ENCODE measurements at regions of chr20 and their contacts with region 1.

Region 1: DNA sequence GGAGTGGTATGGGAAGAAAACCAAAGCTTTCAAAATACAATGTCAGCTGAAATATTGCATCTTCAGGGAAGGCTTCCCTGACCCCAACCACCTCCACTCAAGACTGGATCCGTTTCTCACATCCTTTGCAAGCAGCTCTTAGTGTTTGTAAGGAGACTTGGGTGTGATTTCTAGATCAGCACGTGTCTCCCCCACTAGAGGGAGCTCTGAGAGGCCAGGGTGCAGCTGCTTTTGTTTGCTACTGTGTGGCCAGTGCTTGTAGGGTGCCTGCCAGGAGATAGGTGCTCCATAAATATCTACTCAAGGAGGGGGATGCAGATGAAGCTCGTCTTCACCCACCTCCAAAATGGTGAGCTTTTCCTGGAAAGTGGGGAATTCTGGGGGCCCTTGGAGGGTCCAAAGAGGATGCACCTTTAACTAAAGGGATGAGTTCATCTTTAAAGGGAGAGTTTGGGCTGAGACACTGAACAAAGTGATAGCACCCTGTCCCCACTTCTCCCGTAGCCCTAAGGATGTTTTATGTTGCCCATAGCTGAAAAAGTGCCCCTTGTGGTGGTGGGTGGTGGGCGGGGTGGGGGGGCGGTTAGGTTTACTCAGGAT is 52.6 kb upstream of the MAFB start:
- DNase-seq: no peak
- H3K4me3 ChIP-seq: no peak overlapping the region
- H3K27ac ChIP-seq: no peak overlapping the region
- H3K4me1 ChIP-seq: peaks cover 0 to 10% of the 10 kb centered on the region in 2 experiments; a peak in 2 of 4 replicates
- H3K27me3 ChIP-seq: no peaks in the 10 kb centered on the region
- CTCF ChIP-seq: peak; percentile 54
- EP300 ChIP-seq: no peak
- RAD21 ChIP-seq: peak; percentile 48

Region 2: GRCh38 chr20:40687384-40688128 is 54.1 kb before region 1 on chr20:
- CTCF ChIA-PET with region 1: no interaction called
- POLR2A ChIA-PET with region 1: no interaction called
- DNase-seq: peak; percentile 67
- H3K4me3 ChIP-seq: peak overlapping the region; percentile 22 to 77; a peak in 2 of 4 replicates
- H3K27ac ChIP-seq: no peak overlapping the region
- H3K4me1 ChIP-seq: peaks cover 0 to 11% of the 10 kb centered on the region in 2 experiments; a peak in 1 of 4 replicates
- H3K27me3 ChIP-seq: peaks cover 53% of the 10 kb centered on the region
- CTCF ChIP-seq: no peak
- EP300 ChIP-seq: no peak
- RAD21 ChIP-seq: no peak

Region 3: DNA sequence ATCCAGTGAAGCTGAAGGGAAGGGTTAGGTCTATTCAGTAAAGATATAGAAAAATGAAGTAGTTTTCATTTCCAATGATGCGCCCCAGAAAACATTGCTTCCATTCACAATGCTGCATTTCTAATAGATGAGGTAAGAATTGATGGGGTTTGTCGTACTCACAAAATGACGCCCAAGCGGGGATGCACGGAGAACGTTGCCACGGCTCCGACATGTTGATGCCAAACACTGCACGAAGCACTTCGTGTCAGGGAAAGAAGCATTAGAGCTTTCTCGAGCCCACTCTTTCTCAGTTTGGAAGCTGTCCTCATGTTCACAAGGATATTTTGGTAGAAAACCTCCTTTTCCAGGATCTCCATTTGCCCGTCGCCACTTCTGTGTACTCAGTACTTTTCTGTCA is 31.0 kb before region 1 on chr20:
- CTCF ChIA-PET with region 1: no interaction called
- POLR2A ChIA-PET with region 1: no interaction called
- DNase-seq: no peak
- H3K4me3 ChIP-seq: no peak overlapping the region
- H3K27ac ChIP-seq: no peak overlapping the region
- H3K4me1 ChIP-seq: no peaks in the 10 kb centered on the region; a peak in 1 of 4 replicates
- H3K27me3 ChIP-seq: no peaks in the 10 kb centered on the region
- CTCF ChIP-seq: no peak
- EP300 ChIP-seq: no peak
- RAD21 ChIP-seq: no peak

Region 4: GRCh38 chr20:40720826-40721225 is 20.8 kb before region 1 on chr20:
- CTCF ChIA-PET with region 1: interaction called, 10 read pairs
- POLR2A ChIA-PET with region 1: no interaction called
- DNase-seq: no peak
- H3K4me3 ChIP-seq: no peak overlapping the region
- H3K27ac ChIP-seq: no peak overlapping the region
- H3K4me1 ChIP-seq: peaks cover 0 to 11% of the 10 kb centered on the region in 2 experiments; a peak in 1 of 4 replicates
- H3K27me3 ChIP-seq: no peaks in the 10 kb centered on the region; the same call in 1 of the 2 replicates
- CTCF ChIP-seq: no peak
- EP300 ChIP-seq: no peak
- RAD21 ChIP-seq: no peak

Measured in SK-N-SH (cell line).